SK-N-SH (cell line): ENCODE measurements at regions of chr1 and their contacts with region 1.

Region 1: DNA sequence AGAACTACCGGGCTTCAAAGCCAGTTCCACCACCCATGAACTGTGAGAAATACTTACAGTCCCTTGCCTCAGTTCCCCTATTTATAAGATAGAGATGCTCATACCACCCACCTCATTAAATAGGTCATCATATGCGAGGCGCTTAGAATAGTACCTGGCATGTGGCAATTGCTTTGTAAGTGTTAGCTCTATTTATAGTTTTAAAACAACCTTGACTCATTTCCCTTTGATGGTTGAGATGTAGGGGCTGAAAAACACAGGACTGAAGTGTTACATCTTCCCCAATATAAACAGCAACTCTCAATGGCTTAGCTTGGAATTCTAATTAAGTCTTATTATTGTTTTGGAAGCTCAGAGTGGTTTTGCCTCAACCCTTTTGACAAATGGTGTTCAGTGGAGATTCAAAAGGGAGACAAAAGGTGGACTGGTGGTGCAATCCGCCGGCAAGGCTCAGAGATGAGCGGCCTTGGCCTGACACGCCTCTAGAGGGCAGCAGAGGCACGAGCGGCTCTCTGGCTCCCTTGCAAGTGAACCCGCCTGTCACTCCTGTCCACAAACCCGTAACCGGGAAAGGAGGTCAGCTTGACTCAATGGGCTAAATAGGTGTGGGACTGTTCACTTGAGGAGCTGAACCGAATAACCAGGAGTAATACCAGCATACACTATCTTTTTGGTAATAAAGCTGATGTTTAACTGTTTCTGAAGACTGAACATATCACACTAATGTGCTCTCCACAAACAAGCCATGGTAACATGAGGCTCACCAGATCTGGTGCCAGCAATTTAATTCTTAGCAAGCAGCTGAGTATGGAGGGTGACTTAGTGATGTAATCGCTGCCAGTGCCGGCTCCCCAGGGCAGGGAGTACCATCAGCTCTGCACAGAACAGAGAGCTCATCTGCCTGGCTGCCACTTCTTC is 19.5 kb upstream of the SMYD2 start:
- DNase-seq: peak; percentile 72
- H3K4me3 ChIP-seq: peak overlapping the region; percentile 26 to 42; a peak in 3 of 4 replicates
- H3K27ac ChIP-seq: peak overlapping the region in 1 of 2 experiments; percentile 36; a peak in 2 of 4 replicates
- H3K4me1 ChIP-seq: peaks cover 8 to 10% of the 10 kb centered on the region in 2 experiments; a peak in 3 of 4 replicates
- H3K27me3 ChIP-seq: no peaks in the 10 kb centered on the region
- CTCF ChIP-seq: peak; percentile 98
- EP300 ChIP-seq: no peak
- RAD21 ChIP-seq: peak; percentile 91

Region 2: DNA sequence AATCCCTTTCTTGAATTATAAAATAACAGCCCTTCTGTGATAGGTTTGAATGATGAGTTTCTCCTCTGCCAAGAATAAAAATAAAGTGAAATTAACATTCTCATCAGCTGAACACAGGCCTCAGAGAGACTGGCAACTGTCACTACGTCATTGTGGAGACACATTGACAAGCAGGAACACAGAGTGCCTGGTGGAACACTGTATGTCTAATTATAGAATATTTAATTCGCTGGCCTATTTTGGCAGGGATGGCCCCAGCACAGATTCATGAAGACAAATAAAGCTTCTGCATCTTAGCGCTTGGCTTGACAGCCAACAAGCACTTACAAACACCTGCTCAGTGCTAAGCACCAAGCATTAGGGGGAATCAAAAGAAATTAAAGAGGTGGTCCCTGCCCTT is 32.5 kb before region 1 on chr1:
- CTCF ChIA-PET with region 1: interaction called, 13 read pairs
- POLR2A ChIA-PET with region 1: no interaction called
- DNase-seq: no peak
- H3K4me3 ChIP-seq: no peak overlapping the region
- H3K27ac ChIP-seq: no peak overlapping the region
- H3K4me1 ChIP-seq: peaks cover 0 to 2% of the 10 kb centered on the region in 2 experiments; a peak in 1 of 4 replicates
- H3K27me3 ChIP-seq: no peaks in the 10 kb centered on the region; the same call in 1 of the 2 replicates
- CTCF ChIP-seq: no peak
- EP300 ChIP-seq: no peak
- RAD21 ChIP-seq: no peak

Region 3: DNA sequence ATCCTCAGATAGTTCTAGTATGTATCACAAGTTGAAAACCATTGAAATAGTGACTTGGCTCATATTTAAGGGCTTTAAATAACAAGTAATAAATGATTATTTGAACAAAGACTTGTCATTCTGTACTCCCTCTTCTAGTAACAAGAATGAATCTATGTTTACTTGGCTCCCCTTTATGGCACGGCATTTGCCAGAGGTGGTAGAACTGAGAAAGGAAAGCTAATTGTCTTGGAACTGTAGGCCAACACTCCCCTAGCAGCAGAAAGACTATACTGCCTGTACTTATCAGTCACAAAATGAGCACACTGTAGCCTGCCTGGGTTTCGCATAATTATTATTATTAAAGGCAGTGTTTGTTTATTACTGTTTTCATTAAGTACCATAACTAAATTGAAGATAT is 10.1 kb before region 1 on chr1:
- CTCF ChIA-PET with region 1: interaction called, 35 read pairs
- POLR2A ChIA-PET with region 1: no interaction called
- DNase-seq: no peak
- H3K4me3 ChIP-seq: no peak overlapping the region
- H3K27ac ChIP-seq: no peak overlapping the region
- H3K4me1 ChIP-seq: no peaks in the 10 kb centered on the region
- H3K27me3 ChIP-seq: no peaks in the 10 kb centered on the region
- CTCF ChIP-seq: no peak
- EP300 ChIP-seq: no peak
- RAD21 ChIP-seq: no peak

Region 4: DNA sequence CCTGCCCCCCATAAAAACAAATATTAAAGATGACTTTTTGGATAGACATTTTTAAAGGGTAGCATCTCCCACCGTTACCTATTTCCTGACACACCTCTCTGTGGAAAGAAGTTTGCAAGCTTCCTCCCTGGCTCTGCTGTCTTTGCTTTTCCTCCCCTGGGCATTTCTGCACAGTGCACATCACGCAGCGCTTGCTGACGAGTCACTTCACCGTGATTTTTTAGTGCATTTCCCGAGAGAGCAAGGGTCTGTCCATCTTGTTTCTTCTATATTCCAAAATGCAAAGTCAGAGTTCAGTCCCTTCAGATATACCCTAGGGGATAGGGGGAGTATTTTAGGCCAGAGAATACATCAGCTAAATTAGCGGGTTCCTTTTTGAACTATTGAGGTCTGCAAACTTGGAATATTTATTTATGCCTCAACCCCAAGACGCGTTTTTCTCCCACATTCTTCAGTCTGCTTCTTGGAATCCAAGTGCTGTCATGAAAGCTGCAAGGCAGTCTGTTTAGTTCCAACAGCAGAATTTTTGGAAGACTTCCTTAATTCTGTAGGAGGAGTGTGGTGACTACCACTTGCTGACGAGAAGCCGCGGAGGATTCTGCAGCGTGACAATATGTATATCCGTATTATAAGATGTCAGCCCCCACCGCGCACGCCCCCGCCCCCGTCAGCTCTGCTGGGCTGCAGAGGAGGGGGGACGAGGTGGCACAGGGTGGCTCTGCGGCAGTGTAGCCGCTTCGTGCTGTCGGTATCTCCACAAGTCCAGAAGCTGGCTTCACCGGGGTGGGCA is 41.9 kb after region 1 on chr1:
- CTCF ChIA-PET with region 1: interaction called, 23 read pairs
- POLR2A ChIA-PET with region 1: no interaction called
- DNase-seq: no peak
- H3K4me3 ChIP-seq: no peak overlapping the region
- H3K27ac ChIP-seq: no peak overlapping the region
- H3K4me1 ChIP-seq: no peaks in the 10 kb centered on the region
- H3K27me3 ChIP-seq: no peaks in the 10 kb centered on the region
- CTCF ChIP-seq: no peak
- EP300 ChIP-seq: no peak
- RAD21 ChIP-seq: no peak

Region 5: DNA sequence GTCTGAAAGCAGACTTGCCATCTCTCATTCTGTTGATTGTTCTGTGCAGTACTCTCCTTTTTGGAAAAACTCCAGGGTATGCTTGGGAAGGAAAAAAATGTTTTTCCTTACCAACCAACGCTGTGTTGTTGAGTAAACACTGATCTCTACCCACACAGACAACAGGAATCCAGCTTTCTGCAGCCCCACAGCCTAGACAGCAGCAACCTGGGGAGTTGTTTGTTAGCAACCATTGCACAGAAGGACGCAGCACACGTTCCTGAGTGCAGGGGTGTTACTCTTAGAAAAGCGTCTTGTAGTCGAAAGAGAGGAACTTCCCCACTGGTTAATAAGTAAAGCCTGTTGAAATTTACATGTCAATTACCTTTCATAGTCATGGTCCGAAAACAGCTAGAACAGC is 76.0 kb after region 1 on chr1:
- CTCF ChIA-PET with region 1: interaction called, 393 read pairs
- POLR2A ChIA-PET with region 1: no interaction called
- DNase-seq: no peak
- H3K4me3 ChIP-seq: no peak overlapping the region
- H3K27ac ChIP-seq: peak overlapping the region in 1 of 2 experiments; percentile 48; a peak in 1 of 4 replicates
- H3K4me1 ChIP-seq: no peaks in the 10 kb centered on the region; a peak in 1 of 4 replicates
- H3K27me3 ChIP-seq: no peaks in the 10 kb centered on the region
- CTCF ChIP-seq: no peak
- EP300 ChIP-seq: no peak
- RAD21 ChIP-seq: no peak